ENCODE measurements at regions of chr6 and their contacts with region 1.

Region 1: DNA sequence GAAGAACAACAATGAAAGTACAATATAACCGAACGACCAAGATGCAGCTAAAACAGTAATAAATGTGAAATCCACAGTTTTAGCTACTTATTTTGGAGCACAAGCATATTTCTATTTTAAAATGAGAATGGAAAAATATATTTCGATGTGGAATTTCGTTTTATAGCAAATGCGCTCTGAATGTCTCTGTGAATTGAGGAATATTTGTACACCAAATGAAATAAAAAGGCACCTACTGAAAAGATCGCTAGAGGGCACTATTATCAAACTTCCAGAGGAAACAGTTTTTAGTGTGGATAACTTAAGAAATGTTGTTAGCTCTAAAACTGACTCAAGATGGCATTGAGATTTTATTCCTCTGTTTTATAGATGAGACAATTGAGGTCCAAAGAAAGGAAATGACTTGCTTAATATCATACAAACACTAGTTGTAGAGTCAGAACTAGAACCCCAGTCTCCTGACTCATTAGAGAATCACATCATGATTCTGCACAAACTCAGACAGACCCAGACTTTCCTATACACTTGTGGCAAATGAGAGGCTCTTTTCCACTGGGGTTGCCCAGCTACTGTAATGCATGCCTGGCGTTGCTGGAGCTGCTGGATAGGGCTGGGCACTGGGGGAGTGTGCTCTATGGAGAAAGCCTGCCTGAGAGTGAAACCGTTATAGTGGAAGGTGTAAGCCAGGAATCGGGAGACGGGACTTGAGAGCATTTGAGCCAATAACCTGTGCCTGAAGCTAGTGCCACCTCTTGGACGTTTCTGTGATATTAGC is 51.9 kb downstream of the GCLC start:
- DNase-seq: no peak
- ATAC-seq: peak; percentile 82
- H3K4me3 ChIP-seq: no peak overlapping the region
- H3K27ac ChIP-seq: no peak overlapping the region
- H3K4me1 ChIP-seq: no peaks in the 10 kb centered on the region
- H3K27me3 ChIP-seq: no peaks in the 10 kb centered on the region
- CTCF ChIP-seq: peak; percentile 54 to 73 (median 71); a peak in 5 of 6 replicates
- EP300 ChIP-seq: no peak
- POLR2A ChIP-seq: no peak
- RAD21 ChIP-seq: peak; percentile 79

Region 2: DNA sequence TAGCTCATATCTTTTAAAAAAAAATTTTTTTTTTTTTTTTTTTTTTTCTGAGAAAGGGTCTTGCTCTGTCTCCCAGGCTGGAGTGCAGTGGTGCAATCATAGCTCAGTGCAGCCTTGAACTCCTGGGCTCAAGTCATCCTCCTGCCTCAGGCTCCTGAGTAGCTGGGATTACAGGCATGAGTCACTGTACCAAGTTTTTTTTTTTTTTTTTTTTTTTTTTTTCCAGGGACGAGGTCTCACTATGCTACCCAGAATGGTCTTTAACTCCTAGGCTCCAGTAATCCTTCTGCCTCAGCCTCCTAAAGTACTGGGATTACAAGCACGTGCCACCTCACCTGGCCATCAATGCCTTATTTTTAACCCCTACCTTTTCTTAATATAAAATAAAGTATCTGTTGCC is 24.0 kb after region 1 on chr6:
- CTCF ChIA-PET with region 1: interaction called, 11 read pairs
- POLR2A ChIA-PET with region 1: no interaction called
- RAD21 ChIA-PET with region 1: no interaction called
- SMC1A ChIA-PET with region 1: interaction called, 6 read pairs
- in situ Hi-C with region 1: no loop called
- intact Hi-C with region 1: no loop called
- DNase-seq: no peak
- ATAC-seq: no peak
- H3K4me3 ChIP-seq: no peak overlapping the region
- H3K27ac ChIP-seq: no peak overlapping the region
- H3K4me1 ChIP-seq: no peaks in the 10 kb centered on the region
- H3K27me3 ChIP-seq: no peaks in the 10 kb centered on the region
- CTCF ChIP-seq: no peak
- EP300 ChIP-seq: no peak
- POLR2A ChIP-seq: no peak
- RAD21 ChIP-seq: no peak

Region 3: GRCh38 chr6:53530346-53530745 is 37.3 kb after region 1 on chr6:
- CTCF ChIA-PET with region 1: interaction called, 18 read pairs
- POLR2A ChIA-PET with region 1: no interaction called
- RAD21 ChIA-PET with region 1: no interaction called
- SMC1A ChIA-PET with region 1: interaction called, 3 read pairs
- in situ Hi-C with region 1: no loop called
- intact Hi-C with region 1: no loop called
- DNase-seq: no peak
- ATAC-seq: no peak
- H3K4me3 ChIP-seq: no peak overlapping the region
- H3K27ac ChIP-seq: no peak overlapping the region
- H3K4me1 ChIP-seq: peaks cover 10% of the 10 kb centered on the region
- H3K27me3 ChIP-seq: no peaks in the 10 kb centered on the region
- CTCF ChIP-seq: no peak
- EP300 ChIP-seq: no peak
- POLR2A ChIP-seq: no peak
- RAD21 ChIP-seq: no peak

Region 4: GRCh38 chr6:53544470-53545308 is 51.6 kb after region 1 on chr6 and contains the start of gene GCLC:
- CTCF ChIA-PET with region 1: interaction called, 13 read pairs
- POLR2A ChIA-PET with region 1: no interaction called
- RAD21 ChIA-PET with region 1: interaction called, 9 read pairs
- SMC1A ChIA-PET with region 1: interaction called, 5 read pairs
- in situ Hi-C with region 1: no loop called
- intact Hi-C with region 1: loop called (anchors 2 kb)
- DNase-seq: peak; percentile 74
- ATAC-seq: peak; percentile 78
- H3K4me3 ChIP-seq: peak within 1 kb of the TSS; percentile 92
- H3K27ac ChIP-seq: peak within 1 kb of the TSS; percentile 61
- H3K4me1 ChIP-seq: peaks cover 9% of the 10 kb centered on the region
- H3K27me3 ChIP-seq: peaks cover 0 to 6% of the 10 kb centered on the region in 2 experiments; a peak in 1 of 4 replicates
- CTCF ChIP-seq: peak; percentile 55 to 65 (median 59); a peak in 5 of 6 replicates
- EP300 ChIP-seq: no peak; a peak in 1 of 4 replicates
- POLR2A ChIP-seq: peak; percentile 84
- RAD21 ChIP-seq: peak; percentile 44
- polyA plus RNA-seq, gene GCLC: 7.8 to 8.9 TPM

Region 5: DNA sequence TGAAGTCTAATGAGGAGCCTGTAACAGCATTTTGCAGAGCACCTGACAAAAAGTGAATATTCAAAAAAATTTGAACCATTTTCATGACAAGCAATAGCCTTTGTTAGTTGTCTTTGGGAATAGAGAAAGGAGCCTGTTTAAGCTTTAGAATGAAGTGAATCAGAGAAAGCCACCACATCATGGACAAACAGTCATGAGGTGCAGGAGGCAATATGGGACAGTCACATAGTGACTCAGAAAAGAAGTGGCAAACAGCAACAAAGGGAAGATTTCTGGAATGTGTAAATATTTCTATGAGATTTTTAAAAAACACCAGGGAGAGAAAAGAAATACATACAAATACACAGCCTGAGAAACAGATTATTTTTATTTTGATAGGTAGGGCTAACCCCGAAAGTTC is 165.9 kb after region 1 on chr6:
- CTCF ChIA-PET with region 1: interaction called, 14 read pairs
- POLR2A ChIA-PET with region 1: no interaction called
- RAD21 ChIA-PET with region 1: interaction called, 5 read pairs
- SMC1A ChIA-PET with region 1: interaction called, 14 read pairs
- in situ Hi-C with region 1: loop called (anchors 5 kb)
- intact Hi-C with region 1: no loop called
- DNase-seq: no peak
- ATAC-seq: no peak
- H3K4me3 ChIP-seq: no peak overlapping the region
- H3K27ac ChIP-seq: no peak overlapping the region
- H3K4me1 ChIP-seq: no peaks in the 10 kb centered on the region
- H3K27me3 ChIP-seq: peaks cover 0 to 4% of the 10 kb centered on the region in 2 experiments; a peak in 3 of 4 replicates
- CTCF ChIP-seq: no peak
- EP300 ChIP-seq: no peak
- POLR2A ChIP-seq: no peak
- RAD21 ChIP-seq: no peak

Region 6: DNA sequence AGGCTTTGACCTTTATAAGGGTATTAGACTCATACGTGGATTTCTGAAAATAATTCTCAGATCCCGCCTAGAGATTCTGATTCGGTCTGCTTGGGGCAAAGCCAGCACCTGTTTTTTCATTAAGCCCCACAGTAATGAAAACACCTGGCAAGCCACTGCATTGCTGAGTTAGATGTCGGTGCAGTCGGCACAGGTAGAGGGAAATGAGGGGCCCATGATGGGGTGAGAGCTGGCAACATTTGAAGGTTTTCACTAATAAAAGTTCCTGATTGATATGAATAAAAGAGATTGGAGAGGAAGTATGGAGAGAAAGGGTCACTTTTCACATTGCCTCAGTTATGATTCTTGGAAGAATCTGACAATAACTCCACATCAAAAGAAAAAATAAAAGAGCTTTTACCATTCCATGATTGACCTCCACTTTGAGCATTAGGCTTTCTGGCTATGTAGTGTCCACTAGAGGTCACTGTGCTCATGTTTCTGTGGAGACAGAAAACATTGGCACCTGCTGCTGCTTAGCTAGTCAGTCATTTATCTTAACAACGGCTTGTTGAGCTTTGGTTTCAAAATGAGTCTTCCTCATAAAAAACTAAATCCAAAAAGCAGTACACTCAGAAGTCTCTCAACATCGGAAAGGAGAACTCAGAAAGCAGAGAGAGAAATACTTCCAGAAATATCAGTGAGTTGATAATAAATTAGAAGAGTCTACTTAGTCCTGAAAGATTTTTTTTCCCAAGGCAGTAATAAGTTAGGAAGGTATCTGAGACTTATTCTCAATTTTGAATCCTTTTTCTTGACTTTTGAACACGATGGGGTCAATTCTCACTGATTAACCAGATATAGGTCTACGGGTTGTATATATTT is 225.8 kb after region 1 on chr6:
- CTCF ChIA-PET with region 1: interaction called, 261 read pairs
- POLR2A ChIA-PET with region 1: no interaction called
- RAD21 ChIA-PET with region 1: interaction called, 18 read pairs
- SMC1A ChIA-PET with region 1: interaction called, 42 read pairs
- in situ Hi-C with region 1: no loop called
- intact Hi-C with region 1: no loop called
- DNase-seq: peak; percentile 51
- ATAC-seq: peak; percentile 99
- H3K4me3 ChIP-seq: no peak overlapping the region
- H3K27ac ChIP-seq: no peak overlapping the region
- H3K4me1 ChIP-seq: no peaks in the 10 kb centered on the region
- H3K27me3 ChIP-seq: no peaks in the 10 kb centered on the region; a peak in 2 of 4 replicates
- CTCF ChIP-seq: peak; percentile 73 to 88 (median 79)
- EP300 ChIP-seq: peak; percentile 24 to 25; a peak in 1 of 4 replicates
- POLR2A ChIP-seq: no peak
- RAD21 ChIP-seq: peak; percentile 49

Region 7: GRCh38 chr6:53734473-53735299 is 241.6 kb after region 1 on chr6:
- CTCF ChIA-PET with region 1: interaction called, 261 read pairs
- POLR2A ChIA-PET with region 1: no interaction called
- RAD21 ChIA-PET with region 1: interaction called, 21 read pairs
- SMC1A ChIA-PET with region 1: interaction called, 6 read pairs
- in situ Hi-C with region 1: loop called (anchors 5 kb)
- intact Hi-C with region 1: no loop called
- DNase-seq: peak; percentile 26
- ATAC-seq: peak; percentile 83
- H3K4me3 ChIP-seq: no peak overlapping the region
- H3K27ac ChIP-seq: no peak overlapping the region
- H3K4me1 ChIP-seq: peaks cover 16% of the 10 kb centered on the region
- H3K27me3 ChIP-seq: no peaks in the 10 kb centered on the region
- CTCF ChIP-seq: peak; percentile 31 to 38 (median 32); a peak in 3 of 6 replicates
- EP300 ChIP-seq: no peak
- POLR2A ChIP-seq: no peak
- RAD21 ChIP-seq: no peak

Region 8: GRCh38 chr6:54255886-54256285 is 762.8 kb after region 1 on chr6:
- CTCF ChIA-PET with region 1: no interaction called
- POLR2A ChIA-PET with region 1: no interaction called
- RAD21 ChIA-PET with region 1: no interaction called
- SMC1A ChIA-PET with region 1: no interaction called
- in situ Hi-C with region 1: no loop called
- intact Hi-C with region 1: no loop called
- DNase-seq: no peak
- ATAC-seq: no peak
- H3K4me3 ChIP-seq: no peak overlapping the region
- H3K27ac ChIP-seq: no peak overlapping the region
- H3K4me1 ChIP-seq: no peaks in the 10 kb centered on the region
- H3K27me3 ChIP-seq: no peaks in the 10 kb centered on the region
- CTCF ChIP-seq: no peak
- EP300 ChIP-seq: no peak
- POLR2A ChIP-seq: no peak
- RAD21 ChIP-seq: no peak